Activated T-helper 2 cell treated with anti-CD3 and anti-CD28 coated beads, Interferon-gamma antibody, Interleukin-2, Interleukin-4, amounts not matched to agents 10 μg/mL and 5 μg/mL and 100 μg/mL, durations not matched to agents 14 hours and 24 hours and 36 hours (primary cell): ENCODE measurements at regions of chr4 and their contacts with region 1.

Region 1: DNA sequence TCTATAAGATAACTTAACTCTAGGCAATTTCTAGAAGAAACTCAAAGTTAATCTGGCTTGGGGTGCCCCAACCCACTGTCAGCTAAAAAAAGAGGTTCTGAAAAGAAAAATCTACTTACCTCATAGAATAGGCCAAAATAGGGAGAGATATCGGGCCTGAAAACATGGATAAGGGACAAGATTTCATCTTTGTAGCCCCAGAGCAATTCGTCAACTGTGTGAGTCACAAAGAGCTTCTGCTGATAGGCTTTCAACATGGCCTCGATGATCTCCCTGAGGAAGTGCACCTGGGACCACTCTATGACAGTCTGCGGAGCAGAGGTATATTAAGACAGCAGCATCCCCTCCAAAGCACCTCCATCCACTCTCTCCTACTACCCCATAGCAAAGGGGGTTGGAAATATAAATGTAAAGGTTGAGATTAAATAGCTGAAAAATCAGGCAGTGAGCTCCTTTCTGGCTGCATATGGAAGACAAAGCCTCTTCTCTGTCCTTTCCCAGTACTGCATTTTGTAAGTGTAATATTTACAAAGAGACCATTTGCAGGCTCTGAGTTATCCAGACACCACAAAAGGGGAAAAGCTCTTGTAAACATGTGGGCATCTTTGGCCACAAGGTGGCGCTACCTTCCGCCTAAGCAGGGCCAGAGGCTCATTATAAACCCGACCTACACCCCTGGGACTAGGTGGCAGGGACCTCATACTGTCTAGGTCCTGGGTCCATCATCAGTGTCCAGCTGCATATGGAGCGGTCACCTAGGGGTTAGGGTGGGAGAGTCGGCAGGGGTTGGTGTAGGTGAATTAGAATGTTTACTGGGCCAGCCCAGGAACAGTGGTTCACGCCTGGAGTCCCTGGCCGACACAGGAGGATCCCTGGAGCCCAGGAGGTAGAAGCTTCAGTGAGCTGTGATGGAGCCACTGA is 31.5 kb upstream of the NUP54 start:
- DNase-seq: peak; percentile 64
- H3K4me3 Mint-ChIP-seq: no peak overlapping the region
- H3K27ac Mint-ChIP-seq: no peak overlapping the region
- H3K4me1 Mint-ChIP-seq: no peaks in the 10 kb centered on the region
- H3K27me3 Mint-ChIP-seq: no peaks in the 10 kb centered on the region

Region 2: DNA sequence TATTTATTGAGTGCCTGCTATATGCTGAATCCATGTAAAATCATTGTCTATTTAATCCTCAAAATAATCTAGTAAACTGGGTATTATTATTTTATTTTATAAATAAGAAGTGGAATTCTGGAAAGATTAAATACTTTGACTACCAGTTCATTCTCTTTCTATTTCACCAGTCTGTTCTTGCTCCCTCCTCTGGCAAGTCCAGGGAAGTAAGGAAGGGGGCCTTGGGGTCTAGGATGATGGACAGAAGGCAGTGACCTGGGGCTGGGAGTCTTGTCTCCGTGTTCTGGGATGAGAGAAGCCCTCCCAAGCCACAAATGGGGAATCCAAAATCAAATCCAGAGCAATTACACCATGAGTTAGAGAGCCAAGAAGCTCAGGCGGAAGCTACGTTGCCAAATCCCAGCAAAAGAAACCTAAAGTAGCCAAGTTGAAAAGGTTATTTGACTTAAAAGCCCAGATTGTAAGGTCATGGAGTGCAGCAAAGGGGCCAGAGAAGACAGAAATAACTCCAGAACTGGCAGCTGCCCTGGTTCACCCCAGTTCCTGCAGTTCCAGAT is 1275.1 kb before region 1 on chr4:
- intact Hi-C with region 1: loop called (anchors 10 kb)
- DNase-seq: no peak
- H3K4me3 Mint-ChIP-seq: no peak overlapping the region
- H3K27ac Mint-ChIP-seq: no peak overlapping the region
- H3K4me1 Mint-ChIP-seq: no peaks in the 10 kb centered on the region
- H3K27me3 Mint-ChIP-seq: no peaks in the 10 kb centered on the region

Region 3: DNA sequence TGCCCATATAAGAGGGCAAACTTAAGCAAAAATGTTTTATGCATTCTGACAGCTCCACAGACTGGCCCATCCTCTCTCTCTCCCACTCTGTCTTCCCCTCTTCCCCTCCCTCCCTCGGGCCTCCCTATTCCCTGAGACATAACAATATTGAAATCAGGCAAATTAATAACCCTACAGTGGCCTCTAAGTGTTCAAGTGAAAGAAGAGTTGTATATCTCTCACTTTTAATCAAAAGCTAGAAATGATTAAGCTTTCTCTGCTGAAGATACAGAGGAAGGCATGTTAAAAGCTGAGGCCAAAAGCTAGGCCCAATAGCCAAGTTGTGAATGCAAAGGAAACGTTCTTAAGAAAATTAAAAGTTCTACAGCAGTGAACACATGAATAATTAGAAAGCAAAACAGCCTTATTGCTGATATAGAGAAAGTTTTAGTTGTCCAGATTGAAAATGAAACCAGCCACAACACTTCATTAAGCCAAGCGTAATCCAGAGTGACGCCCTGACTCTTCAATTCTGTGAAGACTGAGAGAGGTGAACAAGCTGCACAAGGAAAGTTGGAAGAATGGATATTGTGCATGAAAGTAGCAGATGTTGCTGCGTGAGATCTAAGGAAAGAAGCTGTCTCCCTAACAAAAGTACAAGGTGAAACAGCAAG is 400.4 kb before region 1 on chr4:
- intact Hi-C with region 1: no loop called
- DNase-seq: no peak
- H3K4me3 Mint-ChIP-seq: no peak overlapping the region
- H3K27ac Mint-ChIP-seq: no peak overlapping the region
- H3K4me1 Mint-ChIP-seq: peaks cover 3% of the 10 kb centered on the region
- H3K27me3 Mint-ChIP-seq: no peaks in the 10 kb centered on the region

Region 4: GRCh38 chr4:76275486-76276124 is 95.9 kb after region 1 on chr4:
- intact Hi-C with region 1: no loop called
- DNase-seq: no peak
- H3K4me3 Mint-ChIP-seq: no peak overlapping the region
- H3K27ac Mint-ChIP-seq: no peak overlapping the region
- H3K4me1 Mint-ChIP-seq: no peaks in the 10 kb centered on the region
- H3K27me3 Mint-ChIP-seq: peaks cover 39% of the 10 kb centered on the region

Region 5: GRCh38 chr4:76341063-76341462 is 161.4 kb after region 1 on chr4:
- intact Hi-C with region 1: no loop called
- DNase-seq: no peak
- H3K4me3 Mint-ChIP-seq: no peak overlapping the region
- H3K27ac Mint-ChIP-seq: no peak overlapping the region
- H3K4me1 Mint-ChIP-seq: peaks cover 1% of the 10 kb centered on the region
- H3K27me3 Mint-ChIP-seq: peaks cover 10% of the 10 kb centered on the region

Region 6: DNA sequence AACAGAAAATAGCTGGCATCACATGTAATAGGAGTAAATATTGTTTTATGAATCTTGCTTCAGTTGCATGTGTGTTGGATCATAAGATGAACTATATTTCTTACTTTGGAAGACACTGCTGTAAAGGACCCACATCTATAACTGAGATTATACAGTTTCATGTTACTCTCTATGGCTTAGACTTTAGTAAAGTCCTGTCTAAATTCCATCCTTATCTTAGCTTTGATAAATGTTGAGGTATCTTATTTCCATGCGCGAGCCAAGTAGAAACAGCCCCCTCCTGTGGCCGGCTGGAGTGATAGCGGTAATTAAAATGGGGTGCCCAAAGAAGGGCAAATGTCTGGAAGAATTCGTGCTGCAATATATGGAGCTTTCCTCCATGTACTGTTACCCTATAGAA is 198.3 kb after region 1 on chr4:
- intact Hi-C with region 1: loop called (anchors 1 kb)
- DNase-seq: no peak
- H3K4me3 Mint-ChIP-seq: no peak overlapping the region
- H3K27ac Mint-ChIP-seq: no peak overlapping the region
- H3K4me1 Mint-ChIP-seq: peaks cover 4% of the 10 kb centered on the region
- H3K27me3 Mint-ChIP-seq: peaks cover 14% of the 10 kb centered on the region

Region 7: DNA sequence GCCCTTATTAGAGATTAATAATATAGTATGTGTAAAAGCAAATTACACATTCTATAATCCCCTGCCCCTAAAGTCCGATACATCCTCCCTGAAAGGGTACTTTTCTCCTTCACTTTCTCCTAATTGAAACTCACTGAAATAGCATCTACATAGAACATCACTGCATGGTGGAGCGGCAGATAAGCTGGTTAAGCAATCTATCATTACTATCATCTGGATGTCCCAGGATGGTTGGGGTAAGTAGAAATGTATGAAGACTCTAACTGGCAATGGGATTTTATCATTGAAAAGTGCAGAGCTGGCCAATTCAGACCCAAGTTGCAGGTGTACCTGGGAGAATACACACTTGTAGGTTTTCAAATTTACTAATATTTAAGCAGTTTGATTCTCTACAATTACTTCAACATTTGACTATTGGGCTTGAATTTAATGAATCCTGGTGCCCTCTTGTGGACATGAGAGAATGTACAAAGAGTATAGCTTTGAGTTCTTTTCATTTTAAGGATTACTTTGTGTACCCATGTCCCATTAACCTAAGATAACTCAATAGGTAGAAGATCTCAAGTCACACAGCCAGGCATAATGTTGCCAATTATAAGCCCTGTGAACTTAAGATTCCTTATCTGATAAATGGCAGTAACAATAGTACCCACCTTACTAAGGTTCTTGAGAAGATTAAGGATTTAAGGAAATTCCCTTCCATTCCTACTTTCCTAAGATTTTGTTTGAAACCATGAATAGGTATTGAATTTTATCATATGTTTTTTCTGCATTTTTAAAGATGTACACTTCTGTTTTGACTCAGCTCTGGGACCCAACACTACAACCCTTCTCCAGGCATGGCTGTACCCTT is 325.2 kb after region 1 on chr4:
- intact Hi-C with region 1: loop called (anchors 2 kb)
- DNase-seq: no peak
- H3K4me3 Mint-ChIP-seq: no peak overlapping the region
- H3K27ac Mint-ChIP-seq: no peak overlapping the region
- H3K4me1 Mint-ChIP-seq: no peaks in the 10 kb centered on the region
- H3K27me3 Mint-ChIP-seq: peaks cover 6% of the 10 kb centered on the region